HEK293 (cell line): ENCODE measurements at regions of chr6 and their contacts with region 1.

Region 1: DNA sequence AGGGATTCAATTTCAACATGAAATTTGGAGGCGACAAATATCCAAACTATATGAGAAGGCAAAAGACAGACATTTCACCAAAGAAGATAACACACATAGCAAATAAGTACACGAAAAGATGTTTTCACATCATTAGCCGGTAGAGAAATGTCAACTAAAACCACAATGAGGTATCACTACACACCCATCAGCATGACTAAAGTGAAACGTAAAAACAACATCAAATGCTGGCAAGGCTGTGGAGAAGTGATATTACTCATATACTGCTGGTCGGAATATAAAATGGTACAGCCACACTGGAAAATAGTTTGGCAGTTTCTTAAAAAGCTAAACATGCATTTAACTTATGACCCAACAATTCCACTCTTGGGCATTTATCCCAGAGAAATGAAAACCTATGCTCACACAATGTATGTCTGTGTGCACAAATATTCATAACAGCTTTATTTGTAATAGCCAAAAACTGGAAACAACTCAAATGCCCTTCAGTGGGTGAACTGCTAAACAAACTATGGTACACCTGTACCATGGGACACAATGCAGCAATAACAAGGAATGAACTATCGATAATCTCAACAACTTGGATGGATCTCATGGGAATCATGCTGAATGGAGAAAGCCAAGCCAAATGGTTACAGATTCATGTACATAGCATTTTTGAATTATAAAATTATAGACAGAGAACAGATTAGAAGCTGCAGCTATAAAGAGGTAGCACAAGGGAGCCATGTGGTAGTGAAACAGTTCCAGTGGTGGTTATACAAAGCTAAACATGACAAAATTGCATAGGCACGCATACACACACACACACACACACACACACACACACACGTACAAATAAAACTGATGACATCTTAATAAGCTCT is 8.6 kb downstream of the ADAT2 start:
- H3K4me3 ChIP-seq: no peak overlapping the region
- H3K27ac ChIP-seq: no peak overlapping the region
- H3K4me1 ChIP-seq: no peaks in the 10 kb centered on the region
- CTCF ChIP-seq: no peak

Region 2: DNA sequence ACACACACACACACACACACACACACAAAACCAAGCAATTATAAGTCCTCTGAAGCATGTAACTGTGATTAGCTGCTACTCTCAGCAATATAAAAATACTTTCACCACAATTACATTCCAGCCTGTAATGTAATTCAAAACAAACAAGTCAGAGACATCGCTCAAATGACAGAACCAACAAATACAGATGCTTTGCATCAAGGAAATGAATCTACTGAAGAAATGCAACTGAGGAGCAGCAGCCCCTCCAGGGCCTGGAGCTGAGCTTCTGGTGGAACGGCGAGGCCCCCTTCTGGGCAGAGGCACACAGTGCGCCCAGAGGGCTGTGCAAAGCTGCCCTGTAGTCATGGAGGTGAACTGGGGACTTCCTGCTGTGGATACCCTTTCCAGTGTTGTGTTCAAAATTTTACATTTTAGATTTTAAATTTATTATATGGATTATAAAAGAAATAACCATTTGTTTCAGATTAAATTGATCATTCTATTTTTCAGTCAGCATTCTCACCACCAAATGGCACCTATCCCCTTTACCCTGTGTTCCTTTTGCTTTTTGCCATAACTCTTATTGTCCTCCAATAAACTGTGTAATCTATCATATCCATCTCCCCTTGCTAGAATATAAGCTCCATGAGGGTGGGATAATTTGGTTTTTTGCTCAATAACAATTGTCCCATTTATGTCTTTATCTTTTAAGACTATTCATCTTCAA is 14.7 kb before region 1 on chr6:
- CTCF ChIA-PET with region 1: interaction called, 15 read pairs
- POLR2A ChIA-PET with region 1: no interaction called
- H3K4me3 ChIP-seq: no peak overlapping the region
- H3K27ac ChIP-seq: no peak overlapping the region
- H3K4me1 ChIP-seq: no peaks in the 10 kb centered on the region
- CTCF ChIP-seq: peak; percentile 80